GM10248 (cell line): ENCODE measurements at regions of chr15 and their contacts with region 1.

Region 1: GRCh38 chr15:74322181-74323076 is 45.0 kb downstream of the CYP11A1 start:
- DNase-seq: peak; percentile 86
- CTCF ChIP-seq: peak; percentile 98

Region 2: DNA sequence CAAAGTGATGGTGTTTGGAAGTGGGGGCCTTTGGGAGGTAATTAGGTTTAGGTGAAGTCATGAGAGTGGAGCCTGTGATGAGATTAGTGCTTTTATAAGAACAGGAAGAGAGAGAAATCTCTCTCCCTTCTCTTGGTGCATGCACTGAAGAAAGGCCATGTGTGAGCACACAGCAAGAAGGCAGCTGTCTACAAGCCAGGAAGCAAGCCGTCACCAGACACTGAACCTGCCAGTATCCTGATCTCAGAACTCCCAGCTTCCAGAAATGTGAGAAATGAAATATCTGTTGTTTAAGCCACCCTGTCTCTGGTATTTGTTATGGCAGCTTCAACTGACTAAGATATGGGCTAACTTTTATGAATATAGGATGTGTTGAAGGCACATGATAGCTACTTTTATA is 806.9 kb before region 1 on chr15:
- CTCF ChIA-PET with region 1: no interaction called
- POLR2A ChIA-PET with region 1: no interaction called
- DNase-seq: no peak
- CTCF ChIP-seq: no peak

Region 3: GRCh38 chr15:73781038-73781925 is 541.1 kb before region 1 on chr15:
- CTCF ChIA-PET with region 1: no interaction called
- POLR2A ChIA-PET with region 1: no interaction called
- DNase-seq: no peak
- CTCF ChIP-seq: no peak

Region 4: DNA sequence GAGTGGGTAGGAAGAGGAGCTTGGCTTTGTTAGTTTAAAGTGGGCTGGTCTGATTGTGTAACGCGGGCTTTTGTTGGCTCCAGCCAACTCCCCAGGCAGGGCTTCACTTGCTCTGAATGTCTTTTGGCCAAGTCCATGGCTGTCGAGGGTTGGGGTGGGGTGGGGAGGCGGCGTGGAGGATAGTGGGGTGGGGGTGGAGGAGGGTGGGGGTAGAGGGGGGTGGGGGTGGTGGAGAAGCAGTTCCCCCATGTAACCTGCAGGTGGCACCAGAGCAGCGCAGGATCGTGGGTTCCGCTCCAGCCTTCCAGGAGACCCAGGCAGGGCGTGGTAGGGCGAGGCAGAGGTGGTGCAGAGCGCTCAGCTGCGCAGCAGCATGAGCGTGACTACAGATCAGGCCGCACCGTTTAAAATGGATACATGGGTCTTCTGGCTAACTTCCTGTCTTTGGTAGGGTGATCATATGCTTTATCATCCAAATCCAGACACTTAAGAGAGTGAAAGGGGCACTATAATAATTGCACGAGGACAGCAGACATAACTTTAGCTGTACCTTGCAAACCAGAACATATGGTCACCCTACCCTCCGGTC is 268.4 kb before region 1 on chr15:
- CTCF ChIA-PET with region 1: interaction called, 14 read pairs
- POLR2A ChIA-PET with region 1: no interaction called
- DNase-seq: peak; percentile 78
- CTCF ChIP-seq: peak; percentile 52

Region 5: GRCh38 chr15:74127260-74127953 is 195.0 kb before region 1 on chr15:
- CTCF ChIA-PET with region 1: interaction called, 78 read pairs
- POLR2A ChIA-PET with region 1: no interaction called
- DNase-seq: peak; percentile 83
- CTCF ChIP-seq: peak; percentile 100

Region 6: GRCh38 chr15:74228723-74229081 is 93.7 kb before region 1 on chr15:
- CTCF ChIA-PET with region 1: no interaction called
- POLR2A ChIA-PET with region 1: no interaction called
- DNase-seq: no peak
- CTCF ChIP-seq: no peak

Region 7: GRCh38 chr15:74302821-74303359 is 19.5 kb before region 1 on chr15:
- CTCF ChIA-PET with region 1: interaction called, 100 read pairs
- POLR2A ChIA-PET with region 1: no interaction called
- DNase-seq: peak; percentile 79
- CTCF ChIP-seq: peak; percentile 75

Region 8: DNA sequence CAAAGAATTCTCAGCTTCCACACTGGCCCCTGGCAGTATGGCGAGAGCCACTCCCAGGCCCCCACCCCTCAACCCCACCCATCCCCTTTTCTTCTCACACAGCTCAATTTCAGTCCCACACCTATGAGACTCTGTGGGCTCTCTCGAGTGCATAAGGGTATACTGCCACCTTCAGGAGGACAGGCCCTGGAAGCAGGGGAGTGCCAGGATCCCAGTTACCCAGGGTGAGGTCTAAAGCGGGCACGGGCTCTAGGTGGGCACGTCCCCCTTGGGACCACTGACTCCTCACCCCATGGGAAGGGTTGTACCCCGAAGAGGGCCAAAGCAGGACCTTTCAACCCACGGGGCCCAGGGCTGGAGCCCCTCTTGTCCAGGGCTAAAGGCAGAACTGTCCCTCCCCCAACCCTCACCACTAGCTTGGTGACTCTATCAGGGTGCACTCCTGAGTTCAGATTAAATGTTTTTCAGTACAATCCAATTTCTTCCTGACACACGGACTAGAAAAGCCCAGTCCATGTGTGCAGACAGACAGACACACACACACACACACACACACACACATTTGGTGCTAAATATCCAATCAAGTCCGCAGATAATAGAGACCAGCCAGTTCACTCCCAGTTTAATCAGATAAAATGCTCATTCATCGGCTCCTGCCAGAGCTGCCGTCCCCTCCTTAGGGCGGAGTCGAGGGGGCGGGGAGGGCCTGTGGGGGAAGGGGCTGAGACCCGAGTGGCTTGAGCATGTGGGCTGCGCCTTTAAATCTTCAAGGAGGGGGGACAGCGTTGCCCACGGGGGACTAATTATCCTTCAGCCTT is 14.4 kb before region 1 on chr15:
- CTCF ChIA-PET with region 1: interaction called, 100 read pairs
- POLR2A ChIA-PET with region 1: no interaction called
- DNase-seq: peak; percentile 70
- CTCF ChIP-seq: peak; percentile 82

Region 9: DNA sequence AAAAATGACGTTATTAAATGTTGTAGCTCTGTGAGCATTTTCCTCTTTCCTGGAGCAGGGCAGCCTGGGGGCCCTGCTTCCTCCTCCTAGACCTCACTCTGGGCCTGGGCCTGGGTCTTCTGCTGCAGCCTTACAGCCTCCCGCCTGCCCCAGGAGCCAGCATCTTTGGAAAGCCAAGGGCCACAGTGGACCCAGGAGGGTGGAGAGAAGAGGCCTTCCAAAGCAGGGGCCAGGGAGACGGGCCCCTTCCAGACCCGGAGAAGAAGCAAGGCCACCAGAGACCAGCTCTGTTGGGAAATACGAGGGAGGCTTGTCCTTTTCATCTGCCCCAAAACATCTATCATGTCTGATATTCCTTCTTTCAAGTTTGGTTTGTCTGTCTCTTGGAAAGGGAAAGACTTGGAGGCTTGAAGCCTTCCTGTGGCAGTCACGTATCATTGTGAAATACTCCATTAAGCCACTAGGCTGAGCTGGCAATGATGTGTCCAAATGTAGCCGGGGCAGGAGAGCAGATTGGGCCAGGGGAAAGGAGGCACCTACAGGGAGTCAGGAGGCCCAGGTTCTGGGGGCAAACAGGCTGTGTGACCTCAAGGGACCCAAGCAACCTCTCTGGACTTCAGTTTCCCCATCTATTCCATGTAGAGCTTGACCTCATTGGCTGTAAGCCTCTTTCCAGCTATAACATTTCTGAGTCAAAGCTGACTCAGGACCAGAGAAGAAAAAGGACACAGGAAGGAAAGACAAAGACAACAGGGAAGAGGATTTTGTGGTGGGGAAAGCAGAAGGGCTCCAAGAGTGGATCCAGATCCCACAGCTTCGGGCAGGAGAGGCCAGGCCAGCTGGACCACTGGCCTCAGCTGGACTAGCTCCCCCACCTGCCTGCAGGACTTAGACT is 13.9 kb after region 1 on chr15:
- CTCF ChIA-PET with region 1: interaction called, 60 read pairs
- POLR2A ChIA-PET with region 1: no interaction called
- DNase-seq: no peak
- CTCF ChIP-seq: no peak